CD4-positive, alpha-beta T cell (primary cell): ENCODE measurements at regions of chr16 and their contacts with region 1.

Region 1: DNA sequence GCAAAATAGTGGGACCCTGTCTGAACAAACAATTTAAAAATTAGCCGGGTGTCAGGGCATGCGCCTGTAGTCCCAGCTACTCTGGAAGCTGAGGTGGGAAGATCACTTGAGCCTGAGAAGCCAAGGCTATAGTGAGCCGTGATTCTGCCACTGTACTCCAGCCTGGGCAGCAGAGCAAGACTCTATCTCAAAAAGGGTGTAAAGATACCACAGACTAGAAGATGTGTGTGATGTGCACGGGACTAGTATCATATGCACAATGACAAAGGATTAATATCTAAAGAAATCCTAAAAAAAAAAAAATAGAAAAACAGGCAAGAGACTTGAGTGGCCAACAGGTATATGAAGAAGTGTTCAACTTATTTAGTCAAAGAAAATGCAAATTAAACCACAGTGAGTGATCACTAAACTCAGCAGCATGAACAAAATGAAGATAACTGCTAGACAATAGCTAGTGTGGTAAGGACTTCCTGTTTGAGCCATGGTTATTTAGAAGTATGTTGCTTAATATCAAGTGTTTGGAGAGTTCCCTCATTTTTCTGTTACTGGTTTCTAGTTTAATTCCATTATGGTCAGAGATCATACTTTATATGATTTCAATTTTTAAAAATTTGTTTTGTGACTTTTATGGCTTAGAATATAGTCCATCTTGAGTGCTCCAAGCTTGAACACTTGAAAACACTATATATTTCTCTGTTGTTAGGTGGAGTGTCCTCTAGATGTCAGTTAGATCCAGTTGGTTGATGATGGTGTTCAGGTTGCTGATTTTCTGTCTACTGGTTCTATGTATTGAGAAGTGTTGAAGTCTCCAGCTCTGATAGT is 14.7 kb upstream of the SLX4 start:
- DNase-seq: peak in 3 of 14 experiments; percentile 31 to 44 (median 38)
- ATAC-seq: peak; percentile 84
- H3K4me3 ChIP-seq: no peak overlapping the region
- H3K4me3 Mint-ChIP-seq: peak overlapping the region; percentile 8
- H3K27ac ChIP-seq: peak overlapping the region; percentile 29 to 61
- H3K27ac Mint-ChIP-seq: peak overlapping the region; percentile 82
- H3K4me1 ChIP-seq: peaks cover 23% of the 10 kb centered on the region
- H3K4me1 Mint-ChIP-seq: peaks cover 45% of the 10 kb centered on the region
- H3K27me3 ChIP-seq: no peaks in the 10 kb centered on the region
- H3K27me3 Mint-ChIP-seq: no peaks in the 10 kb centered on the region
- CTCF ChIP-seq: no peak

Region 2: DNA sequence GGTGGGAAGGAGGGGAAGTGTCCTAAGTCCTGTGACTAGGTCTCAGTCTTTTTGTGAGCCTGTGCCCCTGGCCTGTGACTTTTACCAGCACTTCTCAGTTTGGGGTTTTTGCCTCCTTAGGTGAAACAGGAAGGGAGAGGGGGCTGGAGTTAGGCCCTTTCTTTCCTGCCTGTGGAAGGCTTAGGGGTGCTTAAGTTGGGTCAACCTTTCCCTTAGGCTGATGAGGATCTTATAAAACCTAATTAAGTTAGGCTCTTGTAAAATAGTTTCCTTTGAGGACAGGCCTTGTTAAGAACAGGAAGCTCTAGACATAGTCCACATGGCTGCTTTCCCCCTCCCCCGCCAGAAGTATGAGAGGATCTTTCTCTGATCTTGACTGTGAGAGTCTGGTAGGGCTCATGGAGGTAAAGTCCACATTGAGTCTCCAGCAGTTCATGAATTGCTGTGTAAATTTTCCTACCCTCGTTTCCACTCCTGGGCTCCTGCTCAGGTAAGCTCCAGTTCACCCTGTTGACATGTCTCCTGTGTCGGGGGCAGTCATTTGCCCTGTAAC is 11.3 kb after region 1 on chr16:
- CTCF ChIA-PET with region 1: interaction called, 5 read pairs
- POLR2A ChIA-PET with region 1: interaction called, 5 read pairs
- intact Hi-C with region 1: loop called in 1 of 2 experiments (anchors 1 kb)
- DNase-seq: peak in 8 of 14 experiments; percentile 8 to 55 (median 32)
- ATAC-seq: peak; percentile 88
- H3K4me3 ChIP-seq: no peak overlapping the region
- H3K4me3 Mint-ChIP-seq: peak overlapping the region; percentile 34
- H3K27ac ChIP-seq: peak overlapping the region; percentile 14 to 36
- H3K27ac Mint-ChIP-seq: peak overlapping the region; percentile 93
- H3K4me1 ChIP-seq: peaks cover 13% of the 10 kb centered on the region
- H3K4me1 Mint-ChIP-seq: peaks cover 40% of the 10 kb centered on the region
- H3K27me3 ChIP-seq: no peaks in the 10 kb centered on the region
- H3K27me3 Mint-ChIP-seq: no peaks in the 10 kb centered on the region
- CTCF ChIP-seq: no peak

Region 3: GRCh38 chr16:3654249-3654991 is 28.3 kb after region 1 on chr16 and contains the start of gene DNASE1:
- CTCF ChIA-PET with region 1: no interaction called
- POLR2A ChIA-PET with region 1: no interaction called
- intact Hi-C with region 1: no loop called
- DNase-seq: peak; percentile 19 to 74 (median 40)
- ATAC-seq: peak; percentile 77
- H3K4me3 ChIP-seq: no peak within 1 kb of the TSS
- H3K4me3 Mint-ChIP-seq: no peak within 1 kb of the TSS
- H3K27ac ChIP-seq: no peak within 1 kb of the TSS
- H3K27ac Mint-ChIP-seq: peak within 1 kb of the TSS; percentile 55
- H3K4me1 ChIP-seq: peaks cover 3% of the 10 kb centered on the region
- H3K4me1 Mint-ChIP-seq: peaks cover 5% of the 10 kb centered on the region
- H3K27me3 ChIP-seq: no peaks in the 10 kb centered on the region
- H3K27me3 Mint-ChIP-seq: no peaks in the 10 kb centered on the region
- CTCF ChIP-seq: peak; percentile 71
- total RNA-seq, gene DNASE1: 9.5 to 10.4 TPM